ENCODE measurements at regions of chr1 and their contacts with region 1.

Region 1: DNA sequence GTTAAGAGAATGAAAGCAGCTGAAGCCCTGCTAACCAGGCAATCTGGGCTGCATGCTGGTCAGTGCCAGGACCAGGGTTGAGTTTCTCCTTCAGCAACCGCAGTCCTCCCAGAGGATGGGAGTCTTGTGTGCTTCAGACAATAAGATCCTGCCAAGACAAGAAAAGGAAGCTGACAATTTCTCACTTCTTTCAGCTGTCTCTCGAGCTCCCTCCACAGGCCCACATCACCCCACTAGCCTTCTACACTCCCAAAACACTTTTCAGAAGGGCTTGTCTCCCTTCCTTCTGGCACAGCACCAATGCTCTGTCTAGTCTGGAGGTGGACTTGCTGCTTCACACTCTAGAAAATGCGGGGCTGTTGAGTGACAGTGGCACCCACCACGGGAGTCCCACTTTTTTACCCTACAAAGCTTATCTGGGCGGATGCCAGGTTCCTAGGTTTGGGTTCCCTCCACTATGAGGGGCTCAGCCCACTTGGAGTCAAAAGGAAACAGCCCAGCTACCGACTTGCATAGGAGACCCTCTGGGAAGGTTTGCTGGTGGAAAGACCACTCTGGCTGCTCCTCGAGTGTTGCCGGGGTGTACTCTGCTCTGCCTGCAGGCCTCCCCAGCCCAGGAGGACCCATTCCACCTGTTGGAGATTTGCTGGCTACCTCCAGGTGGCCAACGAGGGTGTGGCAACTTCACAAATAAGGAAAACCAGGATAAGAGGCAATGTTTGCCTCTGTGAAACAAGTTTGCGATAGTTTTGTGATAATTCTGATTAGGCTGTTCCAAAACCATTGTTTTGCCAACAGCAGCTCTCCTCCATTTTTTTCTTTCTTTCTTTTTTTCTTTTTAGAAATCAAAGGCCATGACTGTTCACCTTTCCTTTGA is 68.9 kb downstream of the TENT5C start:
- DNase-seq: no peak
- H3K4me3 ChIP-seq: no peak overlapping the region
- H3K27ac ChIP-seq: peak overlapping the region; percentile 6 to 26
- H3K4me1 ChIP-seq: peaks cover 0 to 25% of the 10 kb centered on the region in 2 donors
- H3K27me3 ChIP-seq: no peaks in the 10 kb centered on the region
- CTCF ChIP-seq: peak in 2 of 3 experiments; percentile 6 to 9

Region 2: DNA sequence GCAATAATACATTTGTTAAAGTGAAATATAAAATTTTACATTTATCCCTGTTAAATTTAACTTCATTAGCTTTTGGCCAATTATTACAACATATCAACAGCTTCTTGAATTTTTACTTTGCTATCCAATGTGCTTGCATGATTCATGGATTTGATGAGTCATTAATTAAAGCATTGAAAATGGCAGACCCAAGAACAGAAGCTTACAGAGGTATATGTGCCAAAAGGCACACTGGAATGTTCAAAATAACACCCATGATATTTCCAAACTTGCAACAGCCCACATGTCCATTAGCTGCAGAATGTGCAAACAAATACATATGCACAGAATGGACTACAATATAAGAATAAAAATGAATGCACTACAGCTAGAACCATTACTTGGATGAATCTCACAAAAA is 383.9 kb before region 1 on chr1:
- intact Hi-C with region 1: no loop called
- DNase-seq: no peak
- H3K4me3 ChIP-seq: no peak overlapping the region
- H3K27ac ChIP-seq: no peak overlapping the region
- H3K4me1 ChIP-seq: no peaks in the 10 kb centered on the region
- H3K27me3 ChIP-seq: no peaks in the 10 kb centered on the region
- CTCF ChIP-seq: no peak

Region 3: GRCh38 chr1:117708323-117709248 is 33.8 kb after region 1 on chr1:
- intact Hi-C with region 1: loop called (anchors 5 kb)
- DNase-seq: no peak
- H3K4me3 ChIP-seq: no peak overlapping the region
- H3K27ac ChIP-seq: peak overlapping the region in 1 of 2 donors; percentile 32
- H3K4me1 ChIP-seq: peaks cover 0 to 10% of the 10 kb centered on the region in 2 donors
- H3K27me3 ChIP-seq: no peaks in the 10 kb centered on the region
- CTCF ChIP-seq: no peak